Activated CD4-positive, alpha-beta memory T cell treated with anti-CD3 and anti-CD28 coated beads for 36 hours (primary cell): ENCODE measurements at regions of chr16 and their contacts with region 1.

Region 1: GRCh38 chr16:88785106-88785924 is at the start of gene PIEZO1:
- DNase-seq: peak; percentile 80
- H3K4me3 Mint-ChIP-seq: peak within 1 kb of the TSS; percentile 80
- H3K27ac Mint-ChIP-seq: peak within 1 kb of the TSS; percentile 89
- H3K4me1 Mint-ChIP-seq: peaks cover 37% of the 10 kb centered on the region
- H3K27me3 Mint-ChIP-seq: no peaks in the 10 kb centered on the region
- total RNA-seq, gene PIEZO1: 221 to 234 TPM

Region 2: GRCh38 chr16:88686439-88687253 is 98.7 kb before region 1 on chr16 and contains the start of gene SNAI3:
- CTCF ChIA-PET with region 1: no interaction called
- POLR2A ChIA-PET with region 1: no interaction called
- intact Hi-C with region 1: loop called (anchors 1 kb)
- DNase-seq: peak; percentile 92
- H3K4me3 Mint-ChIP-seq: peak within 1 kb of the TSS; percentile 74
- H3K27ac Mint-ChIP-seq: peak within 1 kb of the TSS; percentile 49
- H3K4me1 Mint-ChIP-seq: peaks cover 40% of the 10 kb centered on the region
- H3K27me3 Mint-ChIP-seq: no peaks in the 10 kb centered on the region
- total RNA-seq, gene SNAI3: 5.5 to 5.8 TPM

Region 3: DNA sequence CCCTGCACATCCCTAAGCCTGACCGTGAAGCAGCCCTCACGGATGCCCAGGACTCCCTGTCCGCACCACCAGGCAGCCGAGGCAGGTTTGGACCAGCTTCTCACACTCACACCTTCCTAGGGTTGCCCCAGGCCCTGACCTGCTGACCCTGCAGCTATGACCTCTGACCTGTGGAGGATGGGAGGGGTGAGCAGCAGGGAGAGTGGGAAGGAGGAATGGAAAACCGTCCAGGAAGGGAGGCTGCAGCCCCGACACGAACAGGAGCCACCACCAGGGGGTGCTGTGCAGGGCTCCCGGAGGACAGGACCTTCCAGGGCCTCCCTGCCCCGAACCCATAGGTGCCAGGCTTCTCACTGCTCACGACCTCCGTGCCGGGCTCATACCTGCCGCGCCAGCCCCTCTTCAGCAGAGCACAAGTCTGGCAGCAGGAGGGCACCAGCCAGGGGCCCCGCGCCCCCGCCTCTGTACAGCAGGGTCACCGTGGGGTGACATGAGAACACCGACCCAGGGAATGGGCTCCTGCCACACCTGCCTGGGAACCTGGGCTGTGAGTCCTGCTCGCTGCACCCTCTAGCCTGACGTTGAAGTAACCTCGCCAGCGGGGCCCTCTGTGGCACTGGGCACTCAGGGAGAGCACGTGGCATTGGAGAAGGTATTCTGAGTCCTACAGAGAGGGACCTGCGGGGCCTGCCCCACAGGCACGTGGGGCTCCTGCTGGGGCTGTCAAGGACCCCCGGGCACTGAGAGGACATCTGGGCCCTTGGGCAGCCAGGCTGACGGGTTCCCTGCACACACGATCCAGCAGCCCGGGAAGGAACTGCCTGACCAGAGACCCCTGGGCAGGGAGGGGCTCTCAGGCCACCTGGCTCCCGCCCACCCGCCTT is 41.4 kb before region 1 on chr16:
- CTCF ChIA-PET with region 1: interaction called, 118 read pairs
- POLR2A ChIA-PET with region 1: interaction called, 6 read pairs
- intact Hi-C with region 1: loop called (anchors 1 kb)
- DNase-seq: peak; percentile 77
- H3K4me3 Mint-ChIP-seq: no peak overlapping the region
- H3K27ac Mint-ChIP-seq: no peak overlapping the region
- H3K4me1 Mint-ChIP-seq: peaks cover 30% of the 10 kb centered on the region
- H3K27me3 Mint-ChIP-seq: no peaks in the 10 kb centered on the region

Region 4: DNA sequence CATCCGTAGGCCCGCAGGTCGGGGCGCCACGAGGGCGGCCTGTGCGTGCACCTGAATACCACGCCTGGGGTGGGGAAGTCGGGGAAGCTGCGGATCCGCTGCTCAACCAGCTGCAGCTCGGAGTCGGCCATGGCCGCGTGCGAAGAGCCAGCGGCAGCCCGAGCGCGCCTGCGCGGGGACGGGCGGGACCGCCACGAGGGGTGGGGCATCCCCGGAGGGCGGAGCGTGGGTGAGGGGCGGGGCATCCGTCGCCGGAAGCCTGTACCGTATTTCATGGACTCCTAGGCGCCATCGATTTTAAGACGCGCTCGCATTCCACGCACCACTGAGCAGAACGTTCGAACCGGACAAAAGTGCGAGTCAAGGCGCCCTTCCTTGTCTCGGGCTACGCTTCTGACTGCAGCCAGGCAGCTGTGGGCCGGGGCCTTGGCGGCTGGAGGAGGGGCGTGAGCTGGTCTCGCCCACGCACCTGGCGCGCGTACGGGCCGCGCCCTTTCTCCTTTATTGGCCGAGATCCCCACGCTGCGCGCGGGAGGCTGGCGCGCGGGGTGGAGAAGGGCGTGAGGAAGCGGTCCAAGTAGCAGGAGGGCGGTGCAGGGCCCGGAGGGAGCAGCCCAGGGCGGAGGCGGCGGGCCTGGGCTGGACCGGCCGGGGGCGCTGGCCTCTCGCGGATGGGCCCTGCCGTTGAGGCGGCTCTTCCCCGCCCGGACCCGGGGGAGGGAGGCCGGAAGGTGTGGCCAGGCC is 26.6 kb after region 1 on chr16 and contains the start of gene APRT:
- CTCF ChIA-PET with region 1: interaction called, 10 read pairs
- POLR2A ChIA-PET with region 1: interaction called, 81 read pairs
- intact Hi-C with region 1: loop called (anchors 2 kb)
- DNase-seq: peak; percentile 98
- H3K4me3 Mint-ChIP-seq: peak within 1 kb of the TSS; percentile 95
- H3K27ac Mint-ChIP-seq: peak within 1 kb of the TSS; percentile 99
- H3K4me1 Mint-ChIP-seq: peaks cover 27% of the 10 kb centered on the region
- H3K27me3 Mint-ChIP-seq: no peaks in the 10 kb centered on the region
- total RNA-seq, gene APRT: 270 to 272 TPM

Region 5: GRCh38 chr16:88826070-88826840 is 40.9 kb after region 1 on chr16:
- CTCF ChIA-PET with region 1: no interaction called
- POLR2A ChIA-PET with region 1: no interaction called
- intact Hi-C with region 1: no loop called
- DNase-seq: no peak
- H3K4me3 Mint-ChIP-seq: no peak overlapping the region
- H3K27ac Mint-ChIP-seq: no peak overlapping the region
- H3K4me1 Mint-ChIP-seq: no peaks in the 10 kb centered on the region
- H3K27me3 Mint-ChIP-seq: no peaks in the 10 kb centered on the region